CD4-positive, alpha-beta memory T cell (primary cell): ENCODE measurements at regions of chr3 and their contacts with region 1.

Region 1: GRCh38 chr3:56593455-56594158 is 36.6 kb downstream of the CCDC66 start:
- DNase-seq: peak; percentile 72 to 79 (median 78)
- H3K4me3 ChIP-seq: peak overlapping the region; percentile 18 to 23
- H3K4me3 Mint-ChIP-seq: peak overlapping the region; percentile 63 to 89 (median 80)
- H3K27ac ChIP-seq: peak overlapping the region; percentile 56
- H3K27ac Mint-ChIP-seq: peak overlapping the region; percentile 88 to 98 (median 96)
- H3K4me1 ChIP-seq: peaks cover 74% of the 10 kb centered on the region
- H3K4me1 Mint-ChIP-seq: peaks cover 53 to 79% (median 63%) of the 10 kb centered on the region in 4 donors
- H3K27me3 ChIP-seq: no peaks in the 10 kb centered on the region
- H3K27me3 Mint-ChIP-seq: no peaks in the 10 kb centered on the region

Region 2: GRCh38 chr3:55897573-55898224 is 695.9 kb before region 1 on chr3:
- CTCF ChIA-PET with region 1: no interaction called
- POLR2A ChIA-PET with region 1: no interaction called
- intact Hi-C with region 1: no loop called
- DNase-seq: no peak
- H3K4me3 ChIP-seq: no peak overlapping the region
- H3K4me3 Mint-ChIP-seq: no peak overlapping the region
- H3K27ac ChIP-seq: no peak overlapping the region
- H3K27ac Mint-ChIP-seq: no peak overlapping the region
- H3K4me1 ChIP-seq: no peaks in the 10 kb centered on the region
- H3K4me1 Mint-ChIP-seq: no peaks in the 10 kb centered on the region
- H3K27me3 ChIP-seq: no peaks in the 10 kb centered on the region
- H3K27me3 Mint-ChIP-seq: no peaks in the 10 kb centered on the region

Region 3: GRCh38 chr3:56389183-56389830 is 204.3 kb before region 1 on chr3:
- CTCF ChIA-PET with region 1: no interaction called
- POLR2A ChIA-PET with region 1: no interaction called
- intact Hi-C with region 1: no loop called
- DNase-seq: no peak
- H3K4me3 ChIP-seq: no peak overlapping the region
- H3K4me3 Mint-ChIP-seq: no peak overlapping the region
- H3K27ac ChIP-seq: no peak overlapping the region
- H3K27ac Mint-ChIP-seq: no peak overlapping the region
- H3K4me1 ChIP-seq: no peaks in the 10 kb centered on the region
- H3K4me1 Mint-ChIP-seq: no peaks in the 10 kb centered on the region
- H3K27me3 ChIP-seq: no peaks in the 10 kb centered on the region
- H3K27me3 Mint-ChIP-seq: peaks cover 12 to 22% of the 10 kb centered on the region in 2 donors

Region 4: DNA sequence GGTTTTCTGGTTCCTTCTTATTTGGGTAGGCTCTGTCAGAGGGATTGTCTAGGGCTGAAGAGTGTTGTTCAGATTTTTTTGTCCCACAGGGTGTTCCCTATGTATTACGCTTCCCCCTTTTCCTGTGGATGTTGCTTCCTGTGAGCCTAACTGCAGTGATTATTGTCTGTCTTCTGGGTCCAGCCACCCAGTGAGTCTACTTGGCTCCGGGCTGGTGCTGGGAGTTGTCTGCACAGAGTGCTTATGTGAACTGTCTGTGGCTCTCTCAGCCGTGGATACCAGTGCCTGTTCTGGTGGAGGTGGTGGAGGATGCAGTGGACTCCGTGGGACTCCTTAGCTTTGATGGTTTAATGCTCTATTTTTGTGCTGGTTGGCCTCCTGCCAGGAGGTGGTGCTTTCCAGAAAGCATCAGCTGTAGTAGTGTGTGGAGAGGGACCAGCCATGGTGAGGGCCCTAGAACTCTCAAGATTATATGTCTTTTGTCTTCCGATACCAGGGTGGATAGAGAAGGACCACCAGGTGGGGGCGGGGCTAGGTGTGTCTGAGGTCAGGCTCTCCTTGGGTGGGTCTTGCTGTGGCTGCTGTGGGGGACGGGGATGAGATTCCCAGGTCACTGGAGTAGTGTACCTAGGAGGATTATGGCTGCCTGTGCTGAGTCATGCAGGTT is 17.2 kb after region 1 on chr3:
- CTCF ChIA-PET with region 1: interaction called, 3 read pairs
- POLR2A ChIA-PET with region 1: interaction called, 16 read pairs
- intact Hi-C with region 1: loop called (anchors 2 kb)
- DNase-seq: peak in 1 of 5 donors; percentile 27
- H3K4me3 ChIP-seq: no peak overlapping the region
- H3K4me3 Mint-ChIP-seq: peak overlapping the region in 7 of 8 donors; percentile 13 to 69 (median 42)
- H3K27ac ChIP-seq: no peak overlapping the region
- H3K27ac Mint-ChIP-seq: peak overlapping the region; percentile 32 to 87 (median 82)
- H3K4me1 ChIP-seq: peaks cover 60% of the 10 kb centered on the region
- H3K4me1 Mint-ChIP-seq: peaks cover 60 to 74% (median 66%) of the 10 kb centered on the region in 4 donors
- H3K27me3 ChIP-seq: no peaks in the 10 kb centered on the region
- H3K27me3 Mint-ChIP-seq: no peaks in the 10 kb centered on the region

Region 5: DNA sequence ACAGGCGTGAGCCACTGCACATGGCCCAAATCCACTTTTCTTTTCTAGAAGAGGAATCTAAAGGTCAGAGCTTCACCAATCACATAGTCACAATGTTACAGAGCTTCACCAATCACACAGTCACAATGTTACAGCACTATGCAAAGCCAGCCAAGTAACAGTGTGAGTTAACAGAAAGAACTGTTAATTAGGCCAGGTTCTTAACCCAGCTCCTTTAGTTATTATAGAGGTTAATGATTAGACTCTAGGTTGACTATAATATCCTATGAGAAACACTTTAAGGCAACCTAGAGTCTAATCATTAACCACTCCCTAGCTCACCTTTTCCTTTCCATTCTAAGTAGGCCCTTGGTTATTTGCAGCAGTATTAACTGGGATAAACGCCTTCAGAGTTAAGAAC is 35.4 kb after region 1 on chr3:
- CTCF ChIA-PET with region 1: interaction called, 4 read pairs
- POLR2A ChIA-PET with region 1: interaction called, 14 read pairs
- intact Hi-C with region 1: no loop called
- DNase-seq: no peak
- H3K4me3 ChIP-seq: no peak overlapping the region
- H3K4me3 Mint-ChIP-seq: no peak overlapping the region
- H3K27ac ChIP-seq: no peak overlapping the region
- H3K27ac Mint-ChIP-seq: peak overlapping the region; percentile 57 to 81 (median 78)
- H3K4me1 ChIP-seq: no peaks in the 10 kb centered on the region
- H3K4me1 Mint-ChIP-seq: peaks cover 0 to 12% (median 5%) of the 10 kb centered on the region in 4 donors
- H3K27me3 ChIP-seq: no peaks in the 10 kb centered on the region
- H3K27me3 Mint-ChIP-seq: no peaks in the 10 kb centered on the region